ENCODE measurements at regions of chr1 and their contacts with region 1.

Region 1: GRCh38 chr1:57788313-57788712 is 364.5 kb upstream of the DAB1 start:
- DNase-seq: no peak
- H3K4me3 ChIP-seq: no peak overlapping the region
- H3K27ac ChIP-seq: no peak overlapping the region
- H3K4me1 ChIP-seq: no peaks in the 10 kb centered on the region
- H3K27me3 ChIP-seq: no peaks in the 10 kb centered on the region
- CTCF ChIP-seq: no peak
- EP300 ChIP-seq: no peak
- POLR2A ChIP-seq: no peak

Region 2: DNA sequence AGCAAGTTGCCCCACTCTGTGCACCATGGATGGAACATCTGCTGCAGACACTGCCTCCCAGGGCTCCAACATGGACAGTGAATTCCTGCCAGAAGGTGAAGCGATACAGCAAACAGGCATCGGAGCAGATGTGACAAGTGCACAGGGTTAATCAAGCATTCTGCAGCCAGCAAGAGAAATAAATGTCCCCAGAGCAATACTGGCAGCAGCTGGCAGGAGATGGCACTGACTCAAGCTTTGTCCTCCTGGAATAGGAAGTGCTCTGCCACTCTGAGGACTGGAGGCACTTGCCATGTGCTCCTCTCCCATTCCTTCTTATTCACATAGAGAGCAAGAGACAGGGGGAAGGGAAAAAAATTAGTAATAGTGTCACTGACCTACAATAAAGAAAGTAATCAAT is 38.2 kb after region 1 on chr1:
- in situ Hi-C with region 1: no loop called
- intact Hi-C with region 1: loop called (anchors 2 kb)
- DNase-seq: no peak
- H3K4me3 ChIP-seq: no peak overlapping the region
- H3K27ac ChIP-seq: no peak overlapping the region
- H3K4me1 ChIP-seq: no peaks in the 10 kb centered on the region
- H3K27me3 ChIP-seq: no peaks in the 10 kb centered on the region
- CTCF ChIP-seq: no peak
- EP300 ChIP-seq: no peak
- POLR2A ChIP-seq: no peak